ENCODE measurements at regions of chr12 and their contacts with region 1.

Region 1: GRCh38 chr12:8544295-8544694 is 3.6 kb upstream of the CLEC4E start:
- DNase-seq: peak; percentile 81
- ATAC-seq: peak; percentile 80
- H3K4me3 Mint-ChIP-seq: no peak overlapping the region
- H3K27ac Mint-ChIP-seq: no peak overlapping the region
- H3K4me1 Mint-ChIP-seq: peaks cover 8% of the 10 kb centered on the region; the same call in 1 of the 2 replicates
- H3K27me3 Mint-ChIP-seq: no peaks in the 10 kb centered on the region; the same call in 1 of the 2 replicates
- CTCF ChIP-seq: peak; percentile 96

Region 2: DNA sequence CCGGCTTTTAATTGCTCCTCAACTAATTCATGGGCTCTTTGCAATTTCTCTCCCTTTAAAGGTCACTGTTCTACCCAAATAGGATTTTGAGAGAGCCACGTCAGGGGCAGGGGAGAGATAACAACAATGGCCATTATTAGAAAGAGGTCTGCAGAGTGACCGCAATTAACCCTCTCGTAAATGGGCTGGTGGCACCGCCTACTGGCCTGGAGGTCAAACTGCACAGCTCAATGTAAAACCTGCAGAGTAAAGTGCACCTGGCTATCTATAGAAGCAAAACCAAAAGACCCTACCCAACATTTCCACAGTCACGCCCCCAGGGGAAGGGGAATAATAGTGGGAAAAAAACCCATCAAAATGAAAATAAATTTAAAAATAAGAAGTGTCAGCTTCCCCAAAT is 18.0 kb after region 1 on chr12:
- CTCF ChIA-PET with region 1: interaction called, 12 read pairs
- POLR2A ChIA-PET with region 1: no interaction called
- DNase-seq: peak; percentile 42
- ATAC-seq: peak; percentile 59; the same call in 1 of the 2 replicates
- H3K4me3 Mint-ChIP-seq: no peak overlapping the region
- H3K27ac Mint-ChIP-seq: no peak overlapping the region
- H3K4me1 Mint-ChIP-seq: peaks cover 35% of the 10 kb centered on the region
- H3K27me3 Mint-ChIP-seq: peaks cover 3% of the 10 kb centered on the region; the same call in 1 of the 2 replicates
- CTCF ChIP-seq: 0 out of 2 replicates have a peak, but pooled peaks have one; percentile 28

Region 3: GRCh38 chr12:8609061-8609570 is 64.8 kb after region 1 on chr12:
- CTCF ChIA-PET with region 1: interaction called, 67 read pairs
- POLR2A ChIA-PET with region 1: no interaction called
- DNase-seq: peak; percentile 33
- ATAC-seq: peak; percentile 61
- H3K4me3 Mint-ChIP-seq: no peak overlapping the region
- H3K27ac Mint-ChIP-seq: no peak overlapping the region
- H3K4me1 Mint-ChIP-seq: peaks cover 34% of the 10 kb centered on the region
- H3K27me3 Mint-ChIP-seq: peaks cover 6% of the 10 kb centered on the region
- CTCF ChIP-seq: peak; percentile 37; the same call in 1 of the 2 replicates

Region 4: DNA sequence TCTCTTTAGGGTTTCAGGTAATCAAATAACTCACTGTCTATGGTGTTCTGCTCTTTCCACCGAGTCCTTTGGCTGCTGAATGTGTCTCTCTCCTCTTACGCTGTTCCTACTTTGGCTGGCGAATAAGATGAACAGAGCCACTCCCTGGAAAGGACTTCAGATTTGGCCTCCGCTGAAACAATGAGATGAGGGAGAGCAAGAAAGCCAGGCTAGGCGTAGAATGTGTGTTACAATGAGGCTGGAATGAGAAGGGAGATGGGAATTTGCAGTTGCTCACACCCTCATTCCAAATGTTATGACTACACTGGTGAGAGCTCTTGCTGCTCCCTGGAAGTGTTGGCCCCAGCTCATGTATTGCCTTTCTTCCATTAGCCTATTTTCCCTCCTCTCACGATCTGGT is 118.3 kb after region 1 on chr12 and contains the start of gene MFAP5:
- CTCF ChIA-PET with region 1: interaction called, 49 read pairs
- POLR2A ChIA-PET with region 1: no interaction called
- DNase-seq: no peak
- ATAC-seq: peak; percentile 29; the same call in 1 of the 2 replicates
- H3K4me3 Mint-ChIP-seq: no peak within 1 kb of the TSS
- H3K27ac Mint-ChIP-seq: no peak within 1 kb of the TSS
- H3K4me1 Mint-ChIP-seq: peaks cover 5% of the 10 kb centered on the region
- H3K27me3 Mint-ChIP-seq: no peaks in the 10 kb centered on the region
- CTCF ChIP-seq: no peak
- total RNA-seq, gene MFAP5: 0.69 to 0.96 TPM in 2 of 3 replicates, not detected in the other

Region 5: GRCh38 chr12:8823565-8824300 is 279.4 kb after region 1 on chr12:
- CTCF ChIA-PET with region 1: interaction called, 32 read pairs
- POLR2A ChIA-PET with region 1: no interaction called
- DNase-seq: peak; percentile 79
- ATAC-seq: peak; percentile 65
- H3K4me3 Mint-ChIP-seq: peak overlapping the region; percentile 64
- H3K27ac Mint-ChIP-seq: peak overlapping the region; percentile 90
- H3K4me1 Mint-ChIP-seq: peaks cover 60% of the 10 kb centered on the region
- H3K27me3 Mint-ChIP-seq: no peaks in the 10 kb centered on the region; the same call in 1 of the 2 replicates
- CTCF ChIP-seq: peak; percentile 76

Region 6: DNA sequence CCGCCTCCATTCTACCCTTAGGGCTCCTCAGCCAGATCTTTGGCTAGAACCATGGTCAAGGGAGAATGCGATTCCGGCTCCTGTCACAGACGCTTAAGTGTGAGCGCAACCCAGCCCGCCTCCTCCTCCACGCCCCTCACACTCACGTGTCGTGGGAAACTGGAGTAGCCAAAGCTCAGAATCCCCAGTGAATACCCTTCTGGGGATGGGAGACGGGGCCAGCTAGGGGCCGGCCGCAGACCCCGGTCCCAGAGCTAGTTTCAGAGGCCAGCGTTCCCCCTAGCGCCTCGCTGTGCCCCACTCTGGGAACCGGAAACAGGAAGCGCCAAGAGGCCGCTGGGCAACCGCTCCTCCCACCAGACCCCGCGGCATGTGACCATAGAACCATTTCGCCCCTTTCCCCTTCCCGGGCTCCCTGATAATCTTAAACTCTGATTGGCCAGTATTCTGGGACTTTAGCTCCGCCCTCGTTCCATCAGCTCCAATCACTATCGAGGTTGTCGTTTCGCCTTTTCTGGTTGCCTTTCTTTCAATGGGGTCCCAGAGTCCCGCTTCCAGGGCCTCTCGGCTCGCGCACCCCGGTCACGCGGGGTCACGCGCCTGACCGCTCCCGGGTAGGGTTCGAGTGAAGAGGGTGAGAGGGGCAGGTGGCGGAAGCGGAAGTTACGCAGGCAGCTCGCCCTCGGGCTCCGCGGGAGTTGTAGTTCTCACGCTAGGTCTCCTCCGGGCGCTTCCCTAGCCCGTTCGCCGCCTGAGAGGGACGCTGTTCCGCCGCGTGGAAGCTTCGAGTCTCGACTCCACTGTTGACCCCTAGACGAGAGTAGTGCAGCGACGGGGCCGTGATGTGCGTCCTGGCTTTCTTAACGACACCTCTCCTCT is 405.3 kb after region 1 on chr12 and contains the start of gene M6PR:
- CTCF ChIA-PET with region 1: interaction called, 10 read pairs
- POLR2A ChIA-PET with region 1: no interaction called
- DNase-seq: peak; percentile 91
- ATAC-seq: peak; percentile 89
- H3K4me3 Mint-ChIP-seq: peak within 1 kb of the TSS; percentile 95
- H3K27ac Mint-ChIP-seq: peak within 1 kb of the TSS; percentile 93
- H3K4me1 Mint-ChIP-seq: peaks cover 20% of the 10 kb centered on the region
- H3K27me3 Mint-ChIP-seq: no peaks in the 10 kb centered on the region
- CTCF ChIP-seq: no peak
- total RNA-seq, gene M6PR: 106 to 139 TPM (median 112 TPM) in 3 replicates